ENCODE measurements at regions of chr2 and their contacts with region 1.

Region 1: GRCh38 chr2:54503192-54503591 is 47.1 kb downstream of the SPTBN1 start:
- DNase-seq: peak; percentile 53
- CTCF ChIP-seq: peak; percentile 65

Region 2: GRCh38 chr2:54106631-54107454 is 396.3 kb before region 1 on chr2:
- CTCF ChIA-PET with region 1: interaction called, 15 read pairs
- POLR2A ChIA-PET with region 1: no interaction called
- DNase-seq: peak; percentile 42
- CTCF ChIP-seq: peak; percentile 66

Region 3: DNA sequence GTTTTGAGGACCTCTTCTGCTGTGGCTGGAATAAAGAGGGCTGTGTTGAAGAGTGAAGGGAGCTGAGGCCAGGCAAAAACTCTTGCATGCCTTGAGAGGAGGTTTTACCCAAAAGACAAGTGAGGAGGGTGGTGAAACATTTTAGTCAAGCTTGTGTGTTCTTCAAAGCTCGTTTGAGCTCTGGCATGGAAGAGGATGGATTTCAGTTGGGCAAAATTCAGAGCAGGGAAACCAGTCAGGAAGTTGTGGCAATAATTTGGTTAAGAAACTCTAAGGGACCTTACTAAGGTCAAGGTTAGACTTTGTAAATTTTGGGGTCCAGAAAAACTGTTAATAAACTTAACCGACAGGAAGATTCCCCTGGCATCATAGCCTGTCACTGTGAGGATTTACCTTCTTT is 12.3 kb before region 1 on chr2:
- CTCF ChIA-PET with region 1: interaction called, 22 read pairs
- POLR2A ChIA-PET with region 1: interaction called, 5 read pairs
- DNase-seq: no peak
- CTCF ChIP-seq: no peak

Region 4: DNA sequence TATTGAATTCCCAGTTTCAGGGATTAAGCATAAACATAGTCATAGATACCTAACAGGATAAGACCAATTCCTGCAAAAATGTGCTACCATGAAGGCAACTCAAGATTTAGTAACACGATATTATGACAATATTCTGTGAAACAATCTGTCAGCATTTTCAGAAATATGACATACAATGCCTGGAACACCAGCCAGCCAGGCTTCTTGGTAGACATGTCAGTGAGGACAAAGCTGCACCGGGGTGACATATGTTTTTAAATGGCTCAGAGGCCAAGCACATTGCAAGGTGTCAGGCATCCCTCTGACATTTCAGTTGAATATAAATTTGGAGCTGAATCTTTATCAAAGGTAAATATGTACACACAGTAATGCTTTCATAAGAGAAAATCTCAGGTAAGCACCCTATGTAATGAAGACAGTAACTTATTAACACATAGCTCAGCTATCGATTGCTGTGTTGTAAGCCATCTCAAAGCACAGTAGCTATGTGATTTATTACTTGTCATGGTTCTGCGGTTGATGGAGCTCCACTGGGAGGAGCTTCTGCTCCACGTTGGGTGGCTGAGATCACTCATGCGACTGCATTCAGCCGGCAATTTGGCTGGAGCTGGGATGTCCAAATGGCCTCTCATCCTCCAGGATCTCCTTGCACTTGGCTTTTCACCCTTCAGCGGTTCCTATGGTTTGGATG is 188.4 kb after region 1 on chr2:
- CTCF ChIA-PET with region 1: no interaction called
- POLR2A ChIA-PET with region 1: no interaction called
- DNase-seq: no peak
- CTCF ChIP-seq: no peak

Measured in GM10248 (cell line).